ENCODE measurements at regions of chr5 and their contacts with region 1.

Region 1: DNA sequence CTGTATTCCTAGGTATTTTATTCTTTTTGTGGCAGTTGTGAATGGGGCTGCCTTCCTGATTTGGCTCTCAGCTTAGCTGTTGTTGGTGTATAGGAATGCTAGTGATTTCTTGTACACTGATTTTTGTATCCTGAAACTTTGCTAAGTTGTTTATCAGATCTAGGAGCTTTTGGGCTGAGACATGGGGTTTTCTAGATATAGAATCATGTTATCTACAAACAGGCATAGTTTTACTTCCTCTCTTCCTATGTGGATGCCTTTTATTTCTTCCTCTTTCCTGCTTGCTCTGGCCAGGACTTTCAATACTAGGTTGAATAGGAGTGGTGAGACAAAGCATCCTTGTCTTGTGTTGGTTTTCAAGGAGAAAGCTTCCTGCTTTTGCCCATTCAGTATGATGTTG is 129.9 kb downstream of the DMXL1 start:
- DNase-seq: no peak
- ATAC-seq: no peak
- H3K4me3 ChIP-seq: no peak overlapping the region
- H3K27ac ChIP-seq: no peak overlapping the region
- H3K4me1 ChIP-seq: no peaks in the 10 kb centered on the region
- H3K27me3 ChIP-seq: no peaks in the 10 kb centered on the region
- CTCF ChIP-seq: no peak
- POLR2A ChIP-seq: no peak
- RAD21 ChIP-seq: no peak

Region 2: GRCh38 chr5:119131530-119132313 is 69.1 kb before region 1 on chr5:
- CTCF ChIA-PET with region 1: no interaction called
- POLR2A ChIA-PET with region 1: no interaction called
- RAD21 ChIA-PET with region 1: no interaction called
- intact Hi-C with region 1: loop called (anchors 5 kb)
- DNase-seq: no peak
- ATAC-seq: no peak
- H3K4me3 ChIP-seq: no peak overlapping the region
- H3K27ac ChIP-seq: no peak overlapping the region
- H3K4me1 ChIP-seq: no peaks in the 10 kb centered on the region
- H3K27me3 ChIP-seq: no peaks in the 10 kb centered on the region
- CTCF ChIP-seq: no peak
- POLR2A ChIP-seq: no peak
- RAD21 ChIP-seq: no peak

Measured in HCT116 (cell line).